ENCODE measurements at regions of chr2 and their contacts with region 1.

Region 1: DNA sequence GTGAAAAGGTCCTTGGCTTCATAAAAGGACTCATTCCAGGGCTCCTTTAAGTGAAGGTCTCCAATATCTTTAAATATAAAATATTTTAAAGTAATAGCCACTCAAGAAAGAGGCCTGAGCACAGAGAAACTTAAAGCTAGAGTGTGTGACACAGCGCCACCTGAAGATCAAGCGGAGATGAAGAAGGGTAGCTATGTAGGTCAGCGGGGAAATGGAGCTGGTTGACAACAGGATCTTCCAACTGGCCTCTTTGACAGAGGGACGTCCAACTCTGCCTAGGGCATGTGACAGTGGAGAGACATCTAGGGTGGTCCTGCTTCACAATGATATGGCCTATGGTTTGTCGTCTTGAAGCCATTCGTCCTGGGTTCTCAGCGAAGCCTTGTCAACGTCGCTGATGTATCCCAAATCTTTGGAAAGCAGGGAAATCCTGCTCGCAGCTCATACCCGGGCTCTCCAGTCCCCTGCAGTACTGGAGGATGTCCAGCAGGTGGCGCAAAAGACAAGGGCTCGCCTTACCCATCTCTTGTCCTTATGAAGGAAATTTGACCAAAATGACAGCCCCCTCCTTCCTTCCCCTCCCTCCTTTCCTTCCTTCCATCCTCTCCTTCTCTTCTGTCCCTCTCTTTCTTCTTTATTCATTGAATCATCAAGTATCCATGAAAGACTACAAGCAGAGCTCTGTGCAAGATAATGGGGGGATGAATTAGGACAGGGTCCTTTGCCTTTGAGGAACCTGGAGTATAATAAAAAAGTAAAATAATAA is 59.6 kb downstream of the LONRF2 start:
- DNase-seq: peak; percentile 14 to 65 (median 42)
- ATAC-seq: peak; percentile 75
- H3K4me3 ChIP-seq: no peak overlapping the region
- H3K4me3 Mint-ChIP-seq: no peak overlapping the region
- H3K27ac ChIP-seq: no peak overlapping the region
- H3K27ac Mint-ChIP-seq: no peak overlapping the region
- H3K4me1 ChIP-seq: no peaks in the 10 kb centered on the region
- H3K4me1 Mint-ChIP-seq: peaks cover 0 to 4% (median 0%) of the 10 kb centered on the region in 7 donors
- H3K27me3 ChIP-seq: no peaks in the 10 kb centered on the region
- H3K27me3 Mint-ChIP-seq: no peaks in the 10 kb centered on the region

Region 2: DNA sequence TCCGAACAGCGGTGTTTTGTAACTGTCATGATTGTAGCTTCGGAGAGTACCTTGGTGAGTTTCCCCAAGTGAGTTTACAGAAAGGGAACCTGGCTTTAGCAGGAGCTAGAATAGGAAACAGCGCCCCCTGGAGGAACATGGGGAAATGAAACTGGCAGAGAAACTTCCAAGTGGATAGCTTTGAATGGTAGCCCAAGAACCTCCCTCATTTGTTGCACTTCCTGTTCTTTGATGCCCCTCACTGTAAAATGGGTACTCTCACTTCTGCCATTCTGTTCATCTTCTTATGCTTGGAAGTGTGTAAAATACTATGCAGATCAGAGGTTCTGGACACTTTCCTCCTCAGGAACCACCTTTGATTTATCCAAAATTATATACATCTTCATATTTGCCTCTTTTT is 118.5 kb after region 1 on chr2:
- CTCF ChIA-PET with region 1: interaction called, 10 read pairs
- POLR2A ChIA-PET with region 1: no interaction called
- intact Hi-C with region 1: loop called in 1 of 2 experiments (anchors 1 kb)
- DNase-seq: peak; percentile 20 to 75 (median 49)
- ATAC-seq: peak; percentile 80
- H3K4me3 ChIP-seq: no peak overlapping the region
- H3K4me3 Mint-ChIP-seq: no peak overlapping the region
- H3K27ac ChIP-seq: no peak overlapping the region
- H3K27ac Mint-ChIP-seq: no peak overlapping the region
- H3K4me1 ChIP-seq: no peaks in the 10 kb centered on the region
- H3K4me1 Mint-ChIP-seq: peaks cover 0 to 6% (median 0%) of the 10 kb centered on the region in 7 donors
- H3K27me3 ChIP-seq: no peaks in the 10 kb centered on the region
- H3K27me3 Mint-ChIP-seq: peaks cover 0 to 12% (median 0%) of the 10 kb centered on the region in 5 donors

Region 3: DNA sequence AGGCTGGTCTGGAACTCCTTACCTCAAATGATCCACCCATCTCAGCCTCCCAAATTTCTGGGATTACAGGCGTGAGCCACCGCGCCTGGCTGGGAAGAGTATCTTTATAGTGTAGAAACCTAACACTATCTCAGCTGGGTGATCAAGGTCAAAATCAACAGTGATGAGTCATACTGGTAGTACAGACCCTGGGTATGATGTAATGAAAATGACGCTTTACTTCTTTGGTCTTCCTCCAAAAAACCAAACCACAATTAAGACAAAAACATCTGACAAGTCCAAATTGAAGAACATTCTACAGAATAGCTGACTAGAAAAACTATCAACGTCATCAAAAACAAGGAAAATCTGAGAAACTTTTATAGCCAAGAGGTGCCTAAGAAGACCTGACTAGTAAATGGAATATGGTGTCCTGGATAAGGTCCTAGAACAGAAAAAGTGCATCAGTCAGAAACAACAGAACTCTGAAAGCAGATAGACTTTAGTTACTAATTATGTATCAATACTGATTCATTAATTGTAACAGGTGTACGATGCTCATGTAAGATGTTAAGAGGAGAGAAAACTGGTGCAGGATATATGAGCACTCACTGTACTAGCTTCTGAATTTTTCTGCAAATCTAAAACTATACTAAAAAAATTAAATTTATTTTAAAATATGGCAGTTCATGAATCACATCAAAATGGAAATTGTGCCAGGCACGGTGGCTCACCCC is 325.5 kb after region 1 on chr2:
- CTCF ChIA-PET with region 1: no interaction called
- POLR2A ChIA-PET with region 1: no interaction called
- intact Hi-C with region 1: loop called in 1 of 2 experiments (anchors 10 kb)
- DNase-seq: peak in 7 of 9 donors; percentile 21 to 69 (median 58)
- ATAC-seq: peak; percentile 94
- H3K4me3 ChIP-seq: no peak overlapping the region
- H3K4me3 Mint-ChIP-seq: peak overlapping the region in 2 of 10 donors; percentile 13 to 60
- H3K27ac ChIP-seq: no peak overlapping the region
- H3K27ac Mint-ChIP-seq: peak overlapping the region in 8 of 9 donors; percentile 1 to 72 (median 32)
- H3K4me1 ChIP-seq: peaks cover 7 to 16% of the 10 kb centered on the region in 2 donors
- H3K4me1 Mint-ChIP-seq: peaks cover 17 to 51% (median 30%) of the 10 kb centered on the region in 7 donors
- H3K27me3 ChIP-seq: no peaks in the 10 kb centered on the region
- H3K27me3 Mint-ChIP-seq: peaks cover 0 to 11% (median 0%) of the 10 kb centered on the region in 5 donors